ENCODE measurements at regions of chr7 and their contacts with region 1.

Region 1: GRCh38 chr7:77697029-77697831 is 971 bp downstream of the RSBN1L start:
- DNase-seq: no peak
- ATAC-seq: peak; percentile 42
- H3K4me3 ChIP-seq: peak overlapping the region; percentile 99
- H3K27ac ChIP-seq: peak overlapping the region; percentile 98
- H3K4me1 ChIP-seq: peaks cover 19% of the 10 kb centered on the region
- H3K27me3 ChIP-seq: no peaks in the 10 kb centered on the region
- CTCF ChIP-seq: no peak

Region 2: GRCh38 chr7:77738871-77739270 is 41.6 kb after region 1 on chr7:
- CTCF ChIA-PET with region 1: no interaction called
- POLR2A ChIA-PET with region 1: interaction called, 27 read pairs
- in situ Hi-C with region 1: no loop called
- intact Hi-C with region 1: no loop called
- DNase-seq: no peak
- ATAC-seq: peak; percentile 92
- H3K4me3 ChIP-seq: no peak overlapping the region
- H3K27ac ChIP-seq: no peak overlapping the region
- H3K4me1 ChIP-seq: no peaks in the 10 kb centered on the region
- H3K27me3 ChIP-seq: no peaks in the 10 kb centered on the region
- CTCF ChIP-seq: no peak

Measured in Panc1 (cell line).